ENCODE measurements at regions of chr17 and their contacts with region 1.

Region 1: DNA sequence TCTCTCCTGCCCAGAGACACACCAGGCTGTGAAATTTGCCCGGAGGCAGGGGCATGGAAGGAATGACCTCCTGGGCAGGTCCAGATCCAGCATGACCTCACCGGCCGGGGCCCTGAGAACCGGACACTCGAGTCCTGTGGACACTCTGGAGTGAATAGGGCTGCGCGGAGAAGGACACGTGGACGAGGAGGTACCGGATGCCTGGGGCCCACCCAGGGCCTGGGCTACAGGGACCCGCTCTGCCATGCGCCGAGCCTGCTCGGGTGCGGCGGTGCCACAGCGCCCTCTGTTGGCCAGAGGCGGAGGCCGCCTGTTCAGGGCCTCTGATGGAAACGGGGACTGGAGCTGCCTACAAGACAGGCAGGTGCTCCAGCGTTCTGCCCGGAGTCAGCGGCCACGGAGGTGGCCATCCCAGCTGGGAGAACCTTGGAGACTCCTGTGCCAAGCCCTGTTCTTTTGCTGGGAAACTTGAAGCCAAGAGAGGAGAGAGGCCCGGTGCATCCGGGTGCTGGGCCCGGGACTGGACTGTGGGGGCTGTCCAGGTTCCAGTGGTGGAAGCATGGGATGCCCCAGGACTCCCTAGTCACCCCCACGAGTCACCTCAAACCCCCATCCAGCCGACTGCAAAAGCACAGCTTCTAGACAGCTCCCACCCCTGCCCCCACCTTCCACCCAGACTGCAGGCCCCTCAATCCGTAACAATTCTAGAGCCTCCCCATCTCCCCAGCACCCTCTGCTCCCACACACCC is 19.3 kb upstream of the NXPH3 start:
- DNase-seq: peak; percentile 89
- H3K4me3 Mint-ChIP-seq: no peak overlapping the region
- H3K27ac Mint-ChIP-seq: no peak overlapping the region
- H3K4me1 Mint-ChIP-seq: peaks cover 5% of the 10 kb centered on the region
- H3K27me3 Mint-ChIP-seq: peaks cover 3% of the 10 kb centered on the region

Region 2: GRCh38 chr17:49315551-49316257 is 240.7 kb before region 1 on chr17:
- CTCF ChIA-PET with region 1: interaction called, 11 read pairs
- POLR2A ChIA-PET with region 1: no interaction called
- intact Hi-C with region 1: no loop called
- DNase-seq: peak; percentile 87
- H3K4me3 Mint-ChIP-seq: peak overlapping the region; percentile 51
- H3K27ac Mint-ChIP-seq: peak overlapping the region; percentile 33
- H3K4me1 Mint-ChIP-seq: peaks cover 11% of the 10 kb centered on the region
- H3K27me3 Mint-ChIP-seq: no peaks in the 10 kb centered on the region

Region 3: GRCh38 chr17:49361902-49362722 is 194.3 kb before region 1 on chr17 and contains the start of gene ZNF652:
- CTCF ChIA-PET with region 1: no interaction called
- POLR2A ChIA-PET with region 1: no interaction called
- intact Hi-C with region 1: no loop called
- DNase-seq: peak; percentile 94
- H3K4me3 Mint-ChIP-seq: peak within 1 kb of the TSS; percentile 94
- H3K27ac Mint-ChIP-seq: peak within 1 kb of the TSS; percentile 95
- H3K4me1 Mint-ChIP-seq: peaks cover 51% of the 10 kb centered on the region
- H3K27me3 Mint-ChIP-seq: no peaks in the 10 kb centered on the region
- total RNA-seq, gene ZNF652: 5.7 to 7.2 TPM

Region 4: GRCh38 chr17:49425004-49425286 is 131.5 kb before region 1 on chr17:
- CTCF ChIA-PET with region 1: interaction called, 29 read pairs
- POLR2A ChIA-PET with region 1: no interaction called
- intact Hi-C with region 1: no loop called
- DNase-seq: no peak
- H3K4me3 Mint-ChIP-seq: no peak overlapping the region
- H3K27ac Mint-ChIP-seq: no peak overlapping the region
- H3K4me1 Mint-ChIP-seq: no peaks in the 10 kb centered on the region
- H3K27me3 Mint-ChIP-seq: peaks cover 22% of the 10 kb centered on the region

Region 5: GRCh38 chr17:49496183-49496866 is 60.1 kb before region 1 on chr17:
- CTCF ChIA-PET with region 1: interaction called, 71 read pairs
- POLR2A ChIA-PET with region 1: no interaction called
- intact Hi-C with region 1: loop called (anchors 2 kb)
- DNase-seq: peak; percentile 84
- H3K4me3 Mint-ChIP-seq: peak overlapping the region; percentile 65
- H3K27ac Mint-ChIP-seq: no peak overlapping the region
- H3K4me1 Mint-ChIP-seq: peaks cover 22% of the 10 kb centered on the region
- H3K27me3 Mint-ChIP-seq: peaks cover 47% of the 10 kb centered on the region

Region 6: GRCh38 chr17:49687878-49688491 is 131.6 kb after region 1 on chr17:
- CTCF ChIA-PET with region 1: interaction called, 12 read pairs
- POLR2A ChIA-PET with region 1: no interaction called
- intact Hi-C with region 1: no loop called
- DNase-seq: peak; percentile 31
- H3K4me3 Mint-ChIP-seq: peak overlapping the region; percentile 45
- H3K27ac Mint-ChIP-seq: peak overlapping the region; percentile 88
- H3K4me1 Mint-ChIP-seq: peaks cover 32% of the 10 kb centered on the region
- H3K27me3 Mint-ChIP-seq: no peaks in the 10 kb centered on the region

Region 7: GRCh38 chr17:49798182-49798581 is 241.8 kb after region 1 on chr17:
- CTCF ChIA-PET with region 1: interaction called, 15 read pairs
- POLR2A ChIA-PET with region 1: no interaction called
- intact Hi-C with region 1: no loop called
- DNase-seq: no peak
- H3K4me3 Mint-ChIP-seq: no peak overlapping the region
- H3K27ac Mint-ChIP-seq: no peak overlapping the region
- H3K4me1 Mint-ChIP-seq: peaks cover 43% of the 10 kb centered on the region
- H3K27me3 Mint-ChIP-seq: no peaks in the 10 kb centered on the region

Measured in activated CD4-positive, alpha-beta memory T cell treated with anti-CD3 and anti-CD28 coated beads for 36 hours (primary cell).